ENCODE measurements at regions of chr12 and their contacts with region 1.

Region 1: DNA sequence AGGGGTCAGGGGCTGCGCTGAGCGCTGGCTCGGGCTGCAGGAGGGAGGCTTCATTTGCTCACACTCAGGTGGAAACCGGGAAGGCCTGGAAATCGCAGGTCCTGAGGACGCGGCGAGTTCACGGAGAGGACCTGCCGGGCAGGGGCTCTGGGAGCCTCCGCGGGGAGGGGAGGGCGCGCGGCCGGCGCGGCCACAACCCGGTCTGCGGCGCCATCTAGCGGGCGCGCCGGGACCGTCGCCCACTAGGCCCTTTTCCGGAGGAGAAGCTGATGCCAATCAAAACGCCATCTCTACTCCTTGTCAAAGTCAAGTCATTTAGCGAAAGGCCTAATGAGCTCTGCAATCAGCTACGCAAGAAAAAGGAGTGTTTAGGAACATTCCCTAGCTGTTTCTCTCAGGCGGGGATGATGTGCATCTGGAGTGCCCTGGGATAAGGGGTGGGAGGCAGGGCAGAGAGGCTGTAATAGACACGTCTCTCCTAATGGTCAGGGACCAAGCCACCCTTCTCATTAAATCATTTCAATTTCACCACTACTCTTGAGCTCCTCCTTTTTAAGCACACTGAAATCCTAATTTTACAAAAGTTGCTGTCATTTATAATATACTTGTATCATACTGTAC is 885.8 kb upstream of the TMEM132C start:
- DNase-seq: peak in 1 of 2 experiments; percentile 62
- H3K4me3 ChIP-seq: no peak overlapping the region
- H3K4me1 ChIP-seq: no peaks in the 10 kb centered on the region
- H3K27me3 ChIP-seq: no peaks in the 10 kb centered on the region

Region 2: GRCh38 chr12:126069549-126070165 is 1311.5 kb before region 1 on chr12:
- in situ Hi-C with region 1: loop called (anchors 25 kb)
- DNase-seq: peak; percentile 20 to 72
- H3K4me3 ChIP-seq: no peak overlapping the region
- H3K4me1 ChIP-seq: no peaks in the 10 kb centered on the region
- H3K27me3 ChIP-seq: no peaks in the 10 kb centered on the region

Measured in HAP-1 (cell line).